ENCODE measurements at regions of chr4 and their contacts with region 1.

Region 1: GRCh38 chr4:186191200-186192065 is at the start of gene CYP4V2:
- DNase-seq: peak; percentile 60
- ATAC-seq: peak; percentile 89
- H3K4me3 ChIP-seq: peak within 1 kb of the TSS; percentile 79 to 89 (median 79)
- H3K27ac ChIP-seq: peak within 1 kb of the TSS; percentile 91
- H3K4me1 ChIP-seq: peaks cover 22% of the 10 kb centered on the region
- H3K27me3 ChIP-seq: no peaks in the 10 kb centered on the region
- CTCF ChIP-seq: peak; percentile 57
- EP300 ChIP-seq: 0 out of 4 replicates have a peak, but pooled peaks of 1 of the 2 experiments have one; percentile 31
- POLR2A ChIP-seq: peak in 1 of 2 experiments; percentile 65; a peak in 3 of 4 replicates
- RAD21 ChIP-seq: peak; percentile 76
- total RNA-seq, gene CYP4V2: 2.1 and 7.2 TPM in 2 replicates

Region 2: DNA sequence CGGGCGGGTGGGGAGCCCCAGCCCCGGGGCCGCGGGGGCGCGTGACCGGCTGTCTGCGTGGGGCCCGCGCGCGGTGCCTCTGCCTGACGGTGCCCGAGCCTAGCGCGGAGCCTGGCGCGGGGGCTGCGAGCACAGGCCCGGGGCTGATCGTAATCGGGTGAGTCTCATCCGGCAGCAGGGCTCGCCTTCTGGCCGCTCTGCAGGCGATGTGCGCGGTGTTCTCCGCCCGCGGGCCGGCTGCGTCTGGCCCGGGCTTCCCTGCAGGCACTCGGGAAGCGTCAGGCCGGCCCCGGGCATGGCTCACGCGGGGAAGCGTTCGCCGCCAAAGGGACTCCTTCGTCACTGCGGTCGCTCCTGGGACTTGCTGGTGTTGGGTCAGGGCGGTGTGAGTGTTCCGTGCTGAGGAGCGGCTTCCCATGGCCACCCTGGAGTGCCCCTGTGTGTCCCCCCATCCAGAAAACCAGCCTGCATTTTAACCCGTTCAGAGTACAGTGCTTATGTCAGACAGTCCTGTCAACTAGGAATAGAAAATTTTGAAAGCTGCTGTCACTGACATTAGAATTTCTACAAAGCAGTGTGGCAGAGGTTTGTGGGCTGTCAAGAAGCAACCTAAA is 46.4 kb before region 1 on chr4:
- CTCF ChIA-PET with region 1: no interaction called
- POLR2A ChIA-PET with region 1: no interaction called
- in situ Hi-C with region 1: no loop called
- intact Hi-C with region 1: loop called (anchors 5 kb)
- DNase-seq: no peak
- ATAC-seq: peak; percentile 76
- H3K4me3 ChIP-seq: peak overlapping the region; percentile 6 to 64 (median 16); a peak in 4 of 6 replicates
- H3K27ac ChIP-seq: no peak overlapping the region
- H3K4me1 ChIP-seq: peaks cover 16% of the 10 kb centered on the region; the same call in 1 of the 2 replicates
- H3K27me3 ChIP-seq: peaks cover 0 to 37% of the 10 kb centered on the region in 2 experiments; a peak in 3 of 5 replicates
- CTCF ChIP-seq: no peak
- EP300 ChIP-seq: no peak
- POLR2A ChIP-seq: no peak
- RAD21 ChIP-seq: no peak

Region 3: DNA sequence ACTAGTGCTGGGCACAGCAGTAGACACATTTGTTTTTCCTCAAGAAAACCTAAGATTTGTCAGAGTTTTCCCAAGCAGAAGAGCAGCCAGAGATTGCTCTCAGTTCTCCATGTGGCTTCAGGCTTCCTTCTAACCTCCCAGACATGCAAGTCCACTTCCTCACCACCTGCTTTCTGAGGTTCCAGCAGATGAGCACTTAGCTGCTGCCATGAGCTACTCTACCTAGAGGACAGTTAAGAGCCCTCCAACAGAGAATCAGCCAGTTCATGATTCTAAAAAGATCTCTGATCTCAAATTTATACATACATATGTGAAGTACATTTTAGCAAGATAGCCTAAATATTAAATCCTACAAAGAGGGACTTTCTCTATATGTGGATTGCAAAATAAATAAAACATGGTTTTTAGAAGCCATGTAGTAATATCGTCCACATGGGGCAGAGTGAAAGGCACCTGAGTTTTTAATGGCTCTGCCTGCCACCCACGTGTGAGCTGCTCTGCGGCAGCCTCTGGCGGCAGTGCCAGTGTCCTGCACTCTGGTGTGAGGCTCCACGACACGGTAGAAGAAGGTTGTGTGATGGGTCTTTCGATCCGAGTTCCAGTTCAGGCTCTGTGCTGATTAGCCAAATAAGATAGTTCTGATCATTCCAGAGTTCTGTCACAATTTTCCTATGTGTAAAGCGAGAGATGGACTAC is 10.2 kb after region 1 on chr4:
- CTCF ChIA-PET with region 1: no interaction called
- POLR2A ChIA-PET with region 1: interaction called, 12 read pairs
- in situ Hi-C with region 1: no loop called
- intact Hi-C with region 1: no loop called
- DNase-seq: peak; percentile 59
- ATAC-seq: peak; percentile 100
- H3K4me3 ChIP-seq: no peak overlapping the region
- H3K27ac ChIP-seq: no peak overlapping the region
- H3K4me1 ChIP-seq: 0 out of 2 replicates have a peak, but pooled peaks cover 5% of the 10 kb centered on the region
- H3K27me3 ChIP-seq: no peaks in the 10 kb centered on the region
- CTCF ChIP-seq: peak; percentile 82
- EP300 ChIP-seq: no peak
- POLR2A ChIP-seq: no peak
- RAD21 ChIP-seq: peak; percentile 81

Region 4: GRCh38 chr4:186260504-186261448 is 69.3 kb after region 1 on chr4:
- CTCF ChIA-PET with region 1: no interaction called
- POLR2A ChIA-PET with region 1: interaction called, 22 read pairs
- in situ Hi-C with region 1: no loop called
- intact Hi-C with region 1: loop called (anchors 5 kb)
- DNase-seq: peak; percentile 77
- ATAC-seq: peak; percentile 89
- H3K4me3 ChIP-seq: peak overlapping the region in 1 of 3 experiments; percentile 42; a peak in 2 of 6 replicates
- H3K27ac ChIP-seq: peak overlapping the region; percentile 93
- H3K4me1 ChIP-seq: peaks cover 64% of the 10 kb centered on the region
- H3K27me3 ChIP-seq: no peaks in the 10 kb centered on the region; a peak in 1 of 5 replicates
- CTCF ChIP-seq: peak; percentile 39
- EP300 ChIP-seq: peak in 1 of 2 experiments; percentile 81; a peak in 2 of 4 replicates
- POLR2A ChIP-seq: peak; percentile 38 to 47
- RAD21 ChIP-seq: peak; percentile 49

Region 5: DNA sequence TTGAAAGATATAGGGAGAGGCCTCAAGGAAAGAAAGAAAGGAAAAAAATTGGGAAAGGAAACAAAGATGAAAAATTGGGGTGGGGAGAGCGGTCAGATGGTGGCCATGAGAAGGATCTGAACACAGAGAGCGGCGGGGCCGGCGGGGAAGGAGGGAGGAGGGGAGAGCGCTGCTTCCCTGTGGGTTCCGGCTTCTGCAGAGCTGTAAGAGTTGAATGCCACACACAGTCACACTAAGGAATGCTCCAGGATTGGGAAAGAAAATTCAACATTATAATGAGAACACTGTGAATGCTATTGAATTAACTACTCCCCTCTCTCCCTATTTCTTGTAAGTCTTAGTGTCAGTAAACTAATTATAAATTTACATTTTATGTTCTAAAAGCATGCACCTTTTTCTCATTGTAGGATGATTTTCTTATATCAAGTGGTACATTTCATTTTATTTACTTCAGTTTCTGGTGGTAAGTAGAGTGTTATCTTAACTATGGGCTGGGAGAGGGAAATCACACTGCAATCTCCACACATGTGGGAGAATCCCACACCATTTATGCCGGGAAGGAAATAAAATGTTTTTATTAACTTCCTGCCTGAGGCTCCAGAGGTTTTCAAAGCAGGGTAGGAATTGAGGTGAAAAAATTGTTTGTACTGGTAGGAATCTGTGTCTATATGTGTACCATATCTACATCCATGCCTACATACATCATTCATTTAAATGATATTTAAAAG is 75.5 kb after region 1 on chr4:
- CTCF ChIA-PET with region 1: no interaction called
- POLR2A ChIA-PET with region 1: interaction called, 22 read pairs
- in situ Hi-C with region 1: no loop called
- intact Hi-C with region 1: loop called (anchors 5 kb)
- DNase-seq: peak; percentile 58
- ATAC-seq: peak; percentile 97
- H3K4me3 ChIP-seq: peak overlapping the region; percentile 64 to 86 (median 69)
- H3K27ac ChIP-seq: peak overlapping the region; percentile 85
- H3K4me1 ChIP-seq: peaks cover 48% of the 10 kb centered on the region
- H3K27me3 ChIP-seq: no peaks in the 10 kb centered on the region
- CTCF ChIP-seq: peak; percentile 3; the same call in 1 of the 2 replicates
- EP300 ChIP-seq: no peak
- POLR2A ChIP-seq: peak; percentile 43 to 59; a peak in 2 of 4 replicates
- RAD21 ChIP-seq: no peak

Region 6: GRCh38 chr4:186351668-186352194 is 160.3 kb after region 1 on chr4:
- CTCF ChIA-PET with region 1: no interaction called
- POLR2A ChIA-PET with region 1: no interaction called
- in situ Hi-C with region 1: no loop called
- intact Hi-C with region 1: no loop called
- DNase-seq: no peak
- ATAC-seq: no peak
- H3K4me3 ChIP-seq: no peak overlapping the region
- H3K27ac ChIP-seq: no peak overlapping the region
- H3K4me1 ChIP-seq: no peaks in the 10 kb centered on the region
- H3K27me3 ChIP-seq: peaks cover 0 to 29% of the 10 kb centered on the region in 2 experiments; a peak in 2 of 5 replicates
- CTCF ChIP-seq: no peak
- EP300 ChIP-seq: no peak
- POLR2A ChIP-seq: no peak
- RAD21 ChIP-seq: no peak

Region 7: GRCh38 chr4:186881521-186882220 is 690.2 kb after region 1 on chr4:
- CTCF ChIA-PET with region 1: no interaction called
- POLR2A ChIA-PET with region 1: no interaction called
- in situ Hi-C with region 1: no loop called
- intact Hi-C with region 1: no loop called
- DNase-seq: no peak
- ATAC-seq: no peak
- H3K4me3 ChIP-seq: no peak overlapping the region
- H3K27ac ChIP-seq: no peak overlapping the region
- H3K4me1 ChIP-seq: peaks cover 11% of the 10 kb centered on the region
- H3K27me3 ChIP-seq: peaks cover 0 to 2% of the 10 kb centered on the region in 2 experiments; a peak in 2 of 5 replicates
- CTCF ChIP-seq: no peak
- EP300 ChIP-seq: no peak
- POLR2A ChIP-seq: no peak
- RAD21 ChIP-seq: no peak